Activated naive CD4-positive, alpha-beta T cell treated with anti-CD3 and anti-CD28 coated beads for 36 hours (primary cell): ENCODE measurements at regions of chr11 and their contacts with region 1.

Region 1: DNA sequence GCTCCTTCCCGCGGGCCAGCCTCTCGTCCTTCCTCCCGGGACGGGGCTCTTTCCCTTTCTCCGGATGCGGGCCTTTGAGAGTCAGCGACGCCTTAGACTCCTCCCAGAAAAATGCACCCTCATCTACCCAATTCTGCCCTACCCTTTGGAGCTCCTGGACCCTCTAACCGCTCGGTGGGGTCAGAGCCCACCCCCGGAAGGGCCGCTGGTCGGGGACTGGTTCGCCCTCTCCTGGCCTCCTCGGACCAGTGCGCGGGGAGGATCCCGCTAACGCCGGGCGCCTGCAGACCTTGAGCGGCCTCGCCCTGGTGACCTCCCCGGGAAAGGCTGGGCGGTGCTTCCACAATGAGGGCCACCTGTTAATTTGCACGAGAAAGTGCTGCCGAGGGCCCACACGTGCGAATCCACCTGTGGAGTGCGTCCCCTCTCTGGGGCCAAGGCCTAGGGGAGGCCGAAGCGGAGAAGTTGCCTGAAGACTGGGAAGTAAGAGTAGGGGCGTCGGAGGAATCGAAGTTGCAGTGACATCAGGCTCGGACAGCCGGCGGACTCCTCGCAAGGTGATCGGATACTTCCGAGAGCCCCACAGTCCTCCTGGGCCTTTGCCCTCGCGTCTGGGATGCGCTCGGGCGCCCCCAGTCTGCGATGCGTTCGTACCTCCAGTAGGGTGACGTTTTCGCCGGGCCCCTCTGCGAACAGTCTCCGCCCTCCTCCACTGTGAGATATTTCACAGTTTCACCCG is 61.5 kb downstream of the ENDOD1 start:
- DNase-seq: peak; percentile 96
- H3K4me3 Mint-ChIP-seq: peak overlapping the region; percentile 85
- H3K27ac Mint-ChIP-seq: peak overlapping the region; percentile 89
- H3K4me1 Mint-ChIP-seq: peaks cover 36% of the 10 kb centered on the region
- H3K27me3 Mint-ChIP-seq: peaks cover 5% of the 10 kb centered on the region

Region 2: GRCh38 chr11:94623120-94623735 is 527.9 kb before region 1 on chr11:
- CTCF ChIA-PET with region 1: no interaction called
- intact Hi-C with region 1: loop called (anchors 1 kb)
- DNase-seq: peak; percentile 78
- H3K4me3 Mint-ChIP-seq: no peak overlapping the region
- H3K27ac Mint-ChIP-seq: no peak overlapping the region
- H3K4me1 Mint-ChIP-seq: no peaks in the 10 kb centered on the region
- H3K27me3 Mint-ChIP-seq: peaks cover 7% of the 10 kb centered on the region

Region 3: GRCh38 chr11:94948070-94948617 is 203.0 kb before region 1 on chr11:
- CTCF ChIA-PET with region 1: no interaction called
- intact Hi-C with region 1: no loop called
- DNase-seq: no peak
- H3K4me3 Mint-ChIP-seq: no peak overlapping the region
- H3K27ac Mint-ChIP-seq: no peak overlapping the region
- H3K4me1 Mint-ChIP-seq: peaks cover 3% of the 10 kb centered on the region
- H3K27me3 Mint-ChIP-seq: no peaks in the 10 kb centered on the region

Region 4: GRCh38 chr11:95089620-95090542 is 61.2 kb before region 1 on chr11 and contains the start of gene ENDOD1:
- CTCF ChIA-PET with region 1: interaction called, 9 read pairs
- intact Hi-C with region 1: loop called (anchors 1 kb)
- DNase-seq: peak; percentile 82
- H3K4me3 Mint-ChIP-seq: peak within 1 kb of the TSS; percentile 86
- H3K27ac Mint-ChIP-seq: peak within 1 kb of the TSS; percentile 87
- H3K4me1 Mint-ChIP-seq: peaks cover 64% of the 10 kb centered on the region
- H3K27me3 Mint-ChIP-seq: no peaks in the 10 kb centered on the region
- total RNA-seq, gene ENDOD1: 14.5 to 15.2 TPM

Region 5: GRCh38 chr11:95375886-95376285 is 224.8 kb after region 1 on chr11:
- CTCF ChIA-PET with region 1: interaction called, 7 read pairs
- intact Hi-C with region 1: loop called (anchors 1 kb)
- DNase-seq: no peak
- H3K4me3 Mint-ChIP-seq: no peak overlapping the region
- H3K27ac Mint-ChIP-seq: no peak overlapping the region
- H3K4me1 Mint-ChIP-seq: peaks cover 2% of the 10 kb centered on the region
- H3K27me3 Mint-ChIP-seq: no peaks in the 10 kb centered on the region

Region 6: GRCh38 chr11:95764267-95764898 is 613.3 kb after region 1 on chr11:
- CTCF ChIA-PET with region 1: interaction called, 157 read pairs
- intact Hi-C with region 1: loop called (anchors 1 kb)
- DNase-seq: no peak
- H3K4me3 Mint-ChIP-seq: no peak overlapping the region
- H3K27ac Mint-ChIP-seq: no peak overlapping the region
- H3K4me1 Mint-ChIP-seq: no peaks in the 10 kb centered on the region
- H3K27me3 Mint-ChIP-seq: peaks cover 1% of the 10 kb centered on the region

Region 7: DNA sequence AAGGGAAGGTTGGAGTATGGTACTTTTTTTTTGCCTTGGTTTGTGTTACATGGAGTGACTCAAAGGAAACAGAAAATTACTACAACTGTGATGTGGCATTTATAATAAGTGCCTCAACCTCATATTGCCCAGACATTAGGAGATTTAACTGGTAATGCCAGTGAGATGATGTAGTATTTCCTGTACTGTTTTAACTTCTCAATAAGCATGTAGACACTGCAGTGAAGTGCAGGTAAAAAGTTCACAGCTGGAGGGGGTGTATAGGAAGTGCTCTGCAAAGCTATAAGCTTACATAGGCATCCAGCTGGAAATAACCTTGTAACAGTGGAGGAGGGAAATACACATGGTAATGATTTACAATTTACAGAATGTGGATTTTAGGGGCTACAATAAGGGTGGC is 911.0 kb after region 1 on chr11:
- CTCF ChIA-PET with region 1: no interaction called
- intact Hi-C with region 1: loop called (anchors 5 kb)
- DNase-seq: peak; percentile 76
- H3K4me3 Mint-ChIP-seq: peak overlapping the region; percentile 13
- H3K27ac Mint-ChIP-seq: peak overlapping the region; percentile 94
- H3K4me1 Mint-ChIP-seq: peaks cover 78% of the 10 kb centered on the region
- H3K27me3 Mint-ChIP-seq: no peaks in the 10 kb centered on the region